PC-9 (cell line): ENCODE measurements at regions of chr2 and their contacts with region 1.

Region 1: GRCh38 chr2:169824373-169825333 is at the start of gene METTL5:
- DNase-seq: peak; percentile 48 to 77
- H3K4me3 ChIP-seq: peak within 1 kb of the TSS; percentile 57
- H3K27ac ChIP-seq: peak within 1 kb of the TSS; percentile 20; the same call in 1 of the 2 replicates
- H3K4me1 ChIP-seq: peaks cover 25% of the 10 kb centered on the region; the same call in 1 of the 2 replicates
- H3K27me3 ChIP-seq: no peaks in the 10 kb centered on the region
- CTCF ChIP-seq: peak; percentile 74; the same call in 1 of the 2 replicates
- total RNA-seq, gene METTL5: 51.1 and 61.4 TPM in 2 replicates

Region 2: GRCh38 chr2:169275696-169276444 is 548.8 kb before region 1 on chr2:
- CTCF ChIA-PET with region 1: no interaction called
- POLR2A ChIA-PET with region 1: no interaction called
- intact Hi-C with region 1: no loop called
- DNase-seq: peak in 1 of 2 experiments; percentile 1
- H3K4me3 ChIP-seq: no peak overlapping the region
- H3K27ac ChIP-seq: no peak overlapping the region
- H3K4me1 ChIP-seq: no peaks in the 10 kb centered on the region
- H3K27me3 ChIP-seq: no peaks in the 10 kb centered on the region
- CTCF ChIP-seq: peak; percentile 47; the same call in 1 of the 2 replicates

Region 3: DNA sequence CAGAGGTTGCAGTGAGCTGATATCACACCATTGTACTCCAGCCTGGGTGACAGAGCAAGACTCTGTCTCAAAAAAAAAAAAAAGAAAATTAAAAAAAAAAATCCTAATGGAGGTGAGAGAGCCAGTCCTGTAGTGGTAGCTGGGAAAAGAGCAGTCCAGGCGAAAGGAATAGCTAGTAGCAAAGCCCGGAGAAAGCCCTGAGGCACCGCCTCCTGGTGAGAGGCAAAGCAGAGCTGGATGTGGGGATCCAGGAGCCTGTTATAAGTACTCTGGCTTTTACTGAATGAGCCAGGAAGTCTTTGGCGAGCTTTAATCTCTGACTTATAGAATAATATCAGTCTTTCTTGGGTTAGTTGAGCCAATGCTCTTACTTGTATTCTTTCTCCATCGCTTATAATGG is 97.6 kb before region 1 on chr2:
- CTCF ChIA-PET with region 1: no interaction called
- POLR2A ChIA-PET with region 1: interaction called, 11 read pairs
- intact Hi-C with region 1: no loop called
- DNase-seq: no peak
- H3K4me3 ChIP-seq: no peak overlapping the region
- H3K27ac ChIP-seq: no peak overlapping the region
- H3K4me1 ChIP-seq: peaks cover 16% of the 10 kb centered on the region
- H3K27me3 ChIP-seq: no peaks in the 10 kb centered on the region
- CTCF ChIP-seq: no peak

Region 4: DNA sequence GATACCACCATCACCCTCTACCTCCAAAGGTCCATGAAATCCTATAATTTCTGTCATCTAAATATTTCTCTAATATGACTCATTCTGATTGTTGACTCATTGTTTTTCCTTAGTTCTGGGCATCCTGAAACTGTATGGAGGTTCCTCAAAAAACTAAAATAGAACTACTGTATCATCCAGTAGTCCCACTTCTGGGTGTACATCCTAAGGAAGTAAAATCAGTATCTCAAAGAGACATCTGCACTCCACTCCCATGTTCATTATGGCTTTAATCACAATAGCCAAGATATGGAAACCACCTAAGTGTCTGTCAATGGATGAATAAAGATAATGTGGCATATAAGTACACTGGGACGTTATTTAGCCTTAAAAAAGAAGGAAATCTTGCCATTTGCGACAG is 227.5 kb after region 1 on chr2:
- CTCF ChIA-PET with region 1: no interaction called
- POLR2A ChIA-PET with region 1: no interaction called
- intact Hi-C with region 1: no loop called
- DNase-seq: no peak
- H3K4me3 ChIP-seq: no peak overlapping the region
- H3K27ac ChIP-seq: no peak overlapping the region
- H3K4me1 ChIP-seq: no peaks in the 10 kb centered on the region
- H3K27me3 ChIP-seq: no peaks in the 10 kb centered on the region
- CTCF ChIP-seq: no peak